ENCODE measurements at regions of chr2 and their contacts with region 1.

Region 1: GRCh38 chr2:171922230-171923022 is at the start of gene HAT1:
- DNase-seq: peak; percentile 98
- ATAC-seq: peak; percentile 93
- H3K4me3 Mint-ChIP-seq: peak within 1 kb of the TSS; percentile 99
- H3K27ac Mint-ChIP-seq: peak within 1 kb of the TSS; percentile 96
- H3K4me1 Mint-ChIP-seq: peaks cover 37% of the 10 kb centered on the region
- H3K27me3 Mint-ChIP-seq: no peaks in the 10 kb centered on the region
- total RNA-seq, gene HAT1: 60.2 to 70.9 TPM

Region 2: GRCh38 chr2:171893824-171894611 is 28.4 kb before region 1 on chr2 and contains the start of gene SLC25A12:
- CTCF ChIA-PET with region 1: interaction called, 15 read pairs
- DNase-seq: peak; percentile 84
- ATAC-seq: peak; percentile 97
- H3K4me3 Mint-ChIP-seq: peak within 1 kb of the TSS; percentile 97
- H3K27ac Mint-ChIP-seq: peak within 1 kb of the TSS; percentile 94
- H3K4me1 Mint-ChIP-seq: peaks cover 37% of the 10 kb centered on the region
- H3K27me3 Mint-ChIP-seq: peaks cover 7% of the 10 kb centered on the region
- total RNA-seq, gene SLC25A12: 28.9 to 31.3 TPM

Region 3: DNA sequence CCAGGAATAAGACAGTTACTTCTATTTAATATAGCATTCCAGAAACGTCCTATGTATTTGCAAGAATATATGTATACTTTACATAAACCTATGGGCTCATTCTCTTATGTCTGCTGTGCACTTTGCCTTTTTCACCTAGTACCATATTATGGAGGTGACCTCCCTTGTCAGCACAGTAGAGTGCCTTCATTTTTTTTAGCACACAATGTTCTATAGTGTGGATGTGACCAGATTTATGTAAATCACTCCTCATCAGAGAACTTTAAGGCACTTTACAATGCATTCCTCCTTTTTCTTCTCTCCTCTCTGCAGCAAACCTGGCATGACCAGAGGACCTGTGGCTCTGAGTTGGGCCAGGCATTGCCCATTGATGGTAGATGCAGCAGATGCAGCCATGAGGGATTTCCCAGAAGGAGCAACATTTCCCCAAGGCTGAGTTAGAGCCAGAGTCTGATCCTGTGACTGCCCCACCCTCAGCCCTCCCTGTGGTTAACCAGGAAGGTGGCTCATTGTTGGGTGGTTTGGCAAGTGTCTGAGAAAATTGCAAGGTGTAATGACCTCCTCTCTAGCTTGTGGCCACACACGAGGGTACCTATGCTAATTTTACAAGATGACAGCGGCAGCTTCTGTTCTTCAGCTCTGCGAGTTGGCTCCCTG is 256.7 kb after region 1 on chr2:
- CTCF ChIA-PET with region 1: no interaction called
- DNase-seq: peak; percentile 53
- ATAC-seq: peak; percentile 53
- H3K4me3 Mint-ChIP-seq: no peak overlapping the region
- H3K27ac Mint-ChIP-seq: no peak overlapping the region
- H3K4me1 Mint-ChIP-seq: peaks cover 10% of the 10 kb centered on the region
- H3K27me3 Mint-ChIP-seq: peaks cover 8% of the 10 kb centered on the region

Region 4: DNA sequence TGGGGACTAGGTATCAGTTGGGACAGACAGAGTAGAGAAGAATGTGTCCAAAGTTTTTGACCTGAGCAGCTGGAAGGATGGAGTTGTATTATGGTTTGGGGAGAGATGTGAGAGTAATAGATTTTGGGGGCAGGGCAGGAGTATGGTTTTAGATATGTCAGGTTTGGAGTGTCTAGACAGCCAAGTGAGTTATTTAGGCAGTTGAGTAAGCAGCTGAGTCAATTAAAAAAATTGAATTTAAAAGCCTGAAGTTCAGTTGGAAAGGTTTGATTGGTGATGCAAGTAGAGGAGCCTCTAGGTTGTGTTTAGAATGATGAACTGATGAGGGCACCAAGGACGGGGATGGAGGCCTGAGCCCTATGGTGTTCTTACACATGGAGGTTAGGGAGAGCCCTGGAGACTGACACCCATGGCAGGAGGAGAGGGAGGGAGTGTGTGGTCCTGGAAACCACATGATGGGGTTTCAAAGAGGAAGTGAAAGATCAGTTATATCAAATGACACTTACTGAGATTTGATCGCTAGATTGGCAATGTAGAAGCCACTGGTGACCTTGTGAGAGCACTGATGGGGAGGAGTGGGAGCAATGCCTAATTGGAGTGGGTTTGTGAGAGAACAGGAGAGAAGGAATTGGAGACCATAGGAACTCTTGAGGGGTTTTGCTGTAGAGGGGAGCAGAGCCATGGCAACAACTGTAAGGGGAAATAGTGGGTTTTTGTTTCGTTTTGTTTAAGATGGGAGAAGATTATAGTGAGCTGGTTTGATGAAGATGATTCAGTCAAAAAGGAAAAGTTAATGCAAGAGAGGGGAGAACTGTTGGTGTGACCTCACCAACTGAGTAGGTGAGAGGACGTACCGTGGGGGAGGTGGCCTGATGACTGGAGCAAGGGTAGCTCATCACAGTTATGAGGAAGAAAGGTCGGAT is 515.3 kb after region 1 on chr2:
- CTCF ChIA-PET with region 1: no interaction called
- DNase-seq: peak; percentile 71
- ATAC-seq: peak; percentile 77
- H3K4me3 Mint-ChIP-seq: no peak overlapping the region
- H3K27ac Mint-ChIP-seq: no peak overlapping the region
- H3K4me1 Mint-ChIP-seq: peaks cover 47% of the 10 kb centered on the region
- H3K27me3 Mint-ChIP-seq: peaks cover 8% of the 10 kb centered on the region

Measured in activated CD8-positive, alpha-beta memory T cell treated with anti-CD3 and anti-CD28 coated beads, Interleukin-2, amount 10 ng/mL, durations not matched to agents 7 days and 5 days (primary cell).